Stomach (tissue), 19 donors: ENCODE measurements at regions of chr7 and their contacts with region 1.

Region 1: DNA sequence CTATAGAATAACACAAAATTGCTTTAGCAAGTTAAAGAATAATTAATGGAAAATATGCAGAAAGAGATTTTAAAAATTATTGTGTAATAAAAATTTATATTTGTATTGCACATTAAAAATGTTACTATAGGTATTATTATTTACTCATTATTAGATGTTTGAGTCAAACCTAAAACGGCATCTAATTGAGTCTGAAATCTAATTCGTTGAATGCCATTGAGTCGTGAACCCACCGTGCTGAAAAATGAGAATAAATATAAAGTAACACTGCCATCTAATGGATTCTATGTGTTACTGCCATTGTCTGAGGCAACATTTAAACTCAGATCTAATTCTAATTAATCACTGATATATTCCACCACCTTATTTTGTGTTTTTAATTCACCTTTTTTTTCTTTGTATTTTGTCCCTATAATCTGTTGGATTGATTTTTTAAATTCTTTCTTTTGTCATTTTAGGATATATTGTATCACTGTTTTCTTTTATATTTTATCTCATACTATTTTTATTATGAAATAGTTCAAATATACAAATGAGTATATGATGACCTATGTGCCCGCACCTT is 62.2 kb downstream of the SAMD9 start:
- DNase-seq: peak in 1 of 2 donors; percentile 66
- H3K4me3 ChIP-seq: no peak overlapping the region
- H3K27ac ChIP-seq: no peak overlapping the region
- H3K4me1 ChIP-seq: peaks cover 0 to 18% (median 5%) of the 10 kb centered on the region in 4 donors
- H3K27me3 ChIP-seq: no peaks in the 10 kb centered on the region
- CTCF ChIP-seq: peak in 5 of 7 experiments; percentile 58 to 83 (median 72)
- EP300 ChIP-seq: no peak
- POLR2A ChIP-seq: no peak

Region 2: GRCh38 chr7:92609921-92610518 is 445.6 kb before region 1 on chr7:
- intact Hi-C with region 1: loop called (anchors 10 kb)
- DNase-seq: peak in 1 of 2 donors; percentile 43
- H3K4me3 ChIP-seq: no peak overlapping the region
- H3K27ac ChIP-seq: no peak overlapping the region
- H3K4me1 ChIP-seq: peaks cover 0 to 8% (median 3%) of the 10 kb centered on the region in 4 donors
- H3K27me3 ChIP-seq: no peaks in the 10 kb centered on the region
- CTCF ChIP-seq: peak in 1 of 7 experiments; percentile 11
- EP300 ChIP-seq: no peak
- POLR2A ChIP-seq: no peak

Region 3: GRCh38 chr7:92669616-92670165 is 385.9 kb before region 1 on chr7:
- intact Hi-C with region 1: no loop called
- DNase-seq: peak in 1 of 2 donors; percentile 37
- H3K4me3 ChIP-seq: no peak overlapping the region
- H3K27ac ChIP-seq: peak overlapping the region in 4 of 5 donors; percentile 37 to 73 (median 63)
- H3K4me1 ChIP-seq: peaks cover 0 to 36% (median 9%) of the 10 kb centered on the region in 4 donors
- H3K27me3 ChIP-seq: no peaks in the 10 kb centered on the region
- CTCF ChIP-seq: no peak
- EP300 ChIP-seq: no peak
- POLR2A ChIP-seq: no peak

Region 4: GRCh38 chr7:92843034-92843760 is 212.4 kb before region 1 on chr7:
- intact Hi-C with region 1: loop called (anchors 10 kb)
- DNase-seq: no peak
- H3K4me3 ChIP-seq: no peak overlapping the region
- H3K27ac ChIP-seq: no peak overlapping the region
- H3K4me1 ChIP-seq: no peaks in the 10 kb centered on the region
- H3K27me3 ChIP-seq: no peaks in the 10 kb centered on the region
- CTCF ChIP-seq: no peak
- EP300 ChIP-seq: no peak
- POLR2A ChIP-seq: no peak